H1 (cell line): ENCODE measurements at regions of chr9 and their contacts with region 1.

Region 1: DNA sequence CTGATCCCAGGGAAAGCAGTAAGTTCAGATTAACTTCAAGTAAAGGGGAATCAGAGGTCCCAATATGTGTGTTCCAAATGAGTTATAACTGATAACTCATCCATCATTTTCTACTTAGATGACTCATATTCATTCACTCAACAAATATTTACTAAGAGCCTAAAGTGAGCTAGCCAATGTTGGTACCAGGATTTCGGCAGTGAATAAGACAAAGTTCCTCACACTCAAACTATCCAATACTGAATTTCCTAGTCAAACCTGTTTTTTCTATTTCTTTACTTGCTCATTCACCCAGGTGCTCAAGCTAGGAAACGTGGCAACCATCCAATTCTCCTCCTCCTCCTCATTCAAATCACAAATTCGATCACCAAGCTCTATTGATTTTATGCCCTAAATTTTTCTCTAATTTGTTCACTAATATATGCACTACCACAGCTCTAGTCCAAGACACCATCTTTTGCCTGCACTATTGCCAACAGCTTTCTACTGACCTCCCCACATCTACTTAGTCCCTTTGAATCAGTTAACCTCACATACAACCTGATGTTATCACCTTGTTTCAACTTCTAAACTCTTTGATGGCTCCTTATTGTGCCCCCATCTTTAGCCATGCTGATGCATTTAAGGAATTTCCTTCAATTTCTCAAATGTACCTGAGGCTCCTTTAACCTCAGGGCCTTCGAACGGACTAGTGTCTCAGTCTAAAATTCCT is 25.6 kb downstream of the FBXW2 start:
- DNase-seq: no peak
- H3K4me3 ChIP-seq: no peak overlapping the region
- H3K27ac ChIP-seq: no peak overlapping the region
- H3K4me1 ChIP-seq: peaks cover 0 to 3% (median 0%) of the 10 kb centered on the region in 4 experiments; a peak in 1 of 7 replicates
- H3K27me3 ChIP-seq: no peaks in the 10 kb centered on the region
- CTCF ChIP-seq: no peak
- EP300 ChIP-seq: no peak
- POLR2A ChIP-seq: no peak
- RAD21 ChIP-seq: no peak

Region 2: GRCh38 chr9:120755827-120756434 is 11.7 kb before region 1 on chr9:
- CTCF ChIA-PET with region 1: interaction called, 31 read pairs
- POLR2A ChIA-PET with region 1: interaction called, 6 read pairs
- DNase-seq: peak; percentile 13 to 85
- H3K4me3 ChIP-seq: no peak overlapping the region
- H3K27ac ChIP-seq: no peak overlapping the region
- H3K4me1 ChIP-seq: no peaks in the 10 kb centered on the region
- H3K27me3 ChIP-seq: no peaks in the 10 kb centered on the region
- CTCF ChIP-seq: peak in 2 of 3 experiments; percentile 84 to 85; a peak in 3 of 4 replicates
- EP300 ChIP-seq: no peak
- POLR2A ChIP-seq: no peak
- RAD21 ChIP-seq: peak; percentile 89 to 93